PC-9 (cell line): ENCODE measurements at regions of chr17 and their contacts with region 1.

Region 1: DNA sequence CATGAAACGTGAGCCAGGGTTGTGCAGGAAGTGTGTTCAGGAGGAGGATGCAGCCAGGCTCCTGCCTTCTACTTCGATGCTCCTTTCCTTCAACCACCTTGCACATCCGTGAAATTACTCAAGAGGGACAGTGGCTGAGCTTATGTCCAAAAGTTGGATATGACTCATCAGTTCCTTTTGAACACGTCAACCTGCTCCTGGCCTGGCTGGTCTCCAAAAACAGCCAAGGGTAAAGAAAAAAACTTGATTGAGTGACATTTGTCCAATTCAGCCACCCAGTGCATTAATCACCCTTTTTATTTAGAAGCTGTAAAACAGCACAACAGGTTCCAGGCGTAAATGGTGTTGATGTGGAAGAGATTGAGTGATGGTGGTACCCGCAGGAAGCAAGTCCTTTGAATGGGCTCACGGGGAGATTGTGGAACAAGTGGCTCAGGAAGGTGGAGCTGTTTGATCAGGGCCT is 173.5 kb upstream of the CACNG5 start:
- DNase-seq: peak; percentile 82 to 95
- H3K4me3 ChIP-seq: no peak overlapping the region
- H3K27ac ChIP-seq: peak overlapping the region; percentile 3; the same call in 1 of the 2 replicates
- H3K4me1 ChIP-seq: peaks cover 19% of the 10 kb centered on the region
- H3K27me3 ChIP-seq: no peaks in the 10 kb centered on the region
- CTCF ChIP-seq: no peak

Region 2: DNA sequence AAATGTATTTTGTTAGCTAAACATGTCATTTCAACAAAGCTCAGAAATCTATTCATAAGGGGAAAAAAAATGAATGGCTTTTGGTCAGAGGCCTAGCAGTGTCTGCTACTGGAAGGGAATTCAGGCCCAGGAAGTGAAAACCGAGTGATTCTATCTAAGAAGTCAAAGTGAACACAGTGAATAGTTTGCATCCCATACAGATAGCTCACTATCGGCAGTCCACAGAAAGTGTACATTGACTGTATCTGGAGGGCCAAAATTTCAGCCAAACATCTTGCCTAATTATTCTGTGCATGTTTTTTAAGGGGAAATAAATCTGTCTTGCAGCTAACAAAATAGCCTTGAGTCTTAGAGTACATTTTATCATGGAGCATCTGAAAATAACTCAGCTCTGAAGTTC is 40.9 kb before region 1 on chr17:
- CTCF ChIA-PET with region 1: no interaction called
- POLR2A ChIA-PET with region 1: no interaction called
- intact Hi-C with region 1: no loop called
- DNase-seq: no peak
- H3K4me3 ChIP-seq: no peak overlapping the region
- H3K27ac ChIP-seq: no peak overlapping the region
- H3K4me1 ChIP-seq: no peaks in the 10 kb centered on the region
- H3K27me3 ChIP-seq: no peaks in the 10 kb centered on the region
- CTCF ChIP-seq: no peak

Region 3: DNA sequence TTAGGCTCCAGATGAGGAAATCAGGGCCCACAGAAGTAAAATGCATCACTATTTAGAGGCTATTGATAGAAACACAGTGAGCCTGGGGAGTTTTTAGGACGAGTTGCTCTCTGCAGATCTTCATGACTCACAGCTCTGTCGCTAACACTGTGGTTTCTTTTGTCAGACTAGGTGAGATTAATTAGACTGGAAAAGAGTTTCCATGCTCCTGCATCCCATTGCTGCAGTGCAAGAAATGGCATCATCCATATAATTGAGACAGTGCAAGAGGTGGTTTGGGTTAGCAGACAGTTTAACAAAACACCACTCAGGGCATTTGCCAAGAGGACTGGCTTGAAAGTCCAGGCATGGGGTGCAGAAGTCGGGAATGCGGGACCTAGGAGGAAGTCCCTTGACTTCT is 25.3 kb before region 1 on chr17:
- CTCF ChIA-PET with region 1: no interaction called
- POLR2A ChIA-PET with region 1: no interaction called
- intact Hi-C with region 1: loop called (anchors 1 kb)
- DNase-seq: peak; percentile 39 to 87
- H3K4me3 ChIP-seq: no peak overlapping the region
- H3K27ac ChIP-seq: peak overlapping the region; percentile 61
- H3K4me1 ChIP-seq: peaks cover 64% of the 10 kb centered on the region
- H3K27me3 ChIP-seq: no peaks in the 10 kb centered on the region
- CTCF ChIP-seq: no peak